A549 (cell line): ENCODE measurements at regions of chr16 and their contacts with region 1.

Region 1: DNA sequence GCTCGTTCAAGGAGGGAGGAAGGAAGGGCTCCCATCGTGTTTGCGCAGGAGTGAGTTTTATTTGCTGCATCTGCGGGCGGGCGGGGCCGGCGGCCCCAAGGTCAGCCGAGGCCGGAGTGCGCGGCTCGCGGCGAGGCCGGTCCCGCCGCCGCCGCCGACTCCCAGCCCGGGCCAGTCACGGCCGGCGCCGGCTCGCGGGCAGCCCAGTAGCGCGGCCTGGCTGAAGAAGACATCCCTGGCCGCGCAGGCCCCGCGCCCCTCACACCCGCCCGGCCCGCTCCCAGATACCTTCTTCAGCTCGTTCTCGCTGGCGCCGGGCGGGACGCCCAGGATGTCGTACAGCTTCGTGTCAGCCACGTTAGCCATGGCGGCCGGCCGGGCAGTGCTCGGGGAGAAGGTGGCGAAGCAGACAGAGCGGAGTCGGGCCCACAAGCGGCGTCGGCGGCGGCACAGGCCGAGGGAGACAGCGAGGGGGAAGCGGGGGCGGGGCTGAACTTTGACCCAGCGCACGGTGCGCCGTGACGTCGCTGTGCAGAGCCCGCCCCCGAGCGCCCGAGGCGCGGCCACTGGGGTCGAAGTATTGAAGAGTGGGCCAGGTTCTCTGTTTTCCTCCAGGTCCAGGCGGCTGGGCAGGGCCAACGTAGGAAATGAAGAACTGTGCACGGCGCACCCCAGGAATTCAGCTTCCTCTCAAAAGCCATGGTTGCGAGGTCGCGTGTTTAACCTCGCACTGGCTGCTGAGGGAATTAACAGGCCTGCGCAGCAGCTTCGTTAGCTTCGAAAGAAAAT is at the start of gene DNAJA2:
- DNase-seq: peak; percentile 85 to 89
- ATAC-seq: peak; percentile 96
- H3K4me3 ChIP-seq: peak within 1 kb of the TSS; percentile 94
- H3K27ac ChIP-seq: peak within 1 kb of the TSS; percentile 97 to 99
- H3K4me1 ChIP-seq: peaks cover 41% of the 10 kb centered on the region
- CTCF ChIP-seq: no peak
- EP300 ChIP-seq: no peak
- POLR2A ChIP-seq: peak; percentile 79; the same call in 1 of the 2 replicates
- RAD21 ChIP-seq: no peak
- polyA plus RNA-seq, gene DNAJA2: 28.8 and 33.7 TPM in 2 replicates

Region 2: DNA sequence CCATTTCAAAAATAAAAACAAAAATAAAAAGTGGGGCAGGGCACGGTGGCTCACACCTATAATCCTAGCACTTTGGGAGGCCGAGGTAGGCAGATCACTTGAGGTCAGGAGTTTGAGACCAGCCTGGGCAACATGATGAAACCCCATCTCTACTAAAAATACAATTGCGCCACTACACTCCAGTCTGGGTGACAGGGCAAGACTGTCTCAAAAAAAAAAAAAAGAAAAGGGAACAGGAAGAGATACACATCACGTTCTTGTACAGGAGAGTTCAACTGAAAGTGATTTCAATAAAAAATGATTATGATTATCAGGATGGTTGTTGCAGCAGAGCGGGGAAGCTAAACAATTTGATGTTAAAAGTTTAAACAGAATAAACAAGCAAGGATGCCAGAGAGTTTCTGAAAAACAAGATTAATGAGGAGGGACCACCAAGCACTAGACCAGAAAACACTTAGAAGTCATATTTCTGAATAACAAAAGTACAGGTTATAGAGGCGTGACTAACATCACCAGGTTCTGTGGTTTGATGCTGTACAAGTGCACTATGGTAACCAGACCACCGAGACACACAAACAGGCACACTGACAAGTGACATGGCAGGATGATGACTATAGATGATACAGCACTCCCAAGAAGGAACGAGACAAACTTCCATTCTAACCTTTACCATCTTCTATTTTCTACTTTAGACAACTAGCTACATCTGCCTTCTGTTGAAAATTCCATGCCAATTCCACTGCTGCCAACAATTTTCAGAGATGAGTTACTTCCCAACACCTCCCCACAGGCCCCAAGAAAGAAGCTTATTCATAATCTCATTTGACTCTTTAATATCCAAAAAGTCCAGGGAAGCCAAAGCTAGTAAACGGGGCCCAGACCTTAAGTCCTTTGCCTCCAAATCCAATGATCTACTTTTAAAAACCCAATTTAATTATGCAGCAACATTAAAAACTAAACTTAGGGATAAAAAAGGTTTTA is 11.7 kb before region 1 on chr16:
- CTCF ChIA-PET with region 1: interaction called, 4 read pairs
- POLR2A ChIA-PET with region 1: interaction called, 11 read pairs
- DNase-seq: no peak
- ATAC-seq: no peak
- H3K4me3 ChIP-seq: no peak overlapping the region
- H3K27ac ChIP-seq: peak overlapping the region in 1 of 2 experiments; percentile 58; a peak in 2 of 6 replicates
- H3K4me1 ChIP-seq: peaks cover 16% of the 10 kb centered on the region; the same call in 2 of the 3 replicates
- CTCF ChIP-seq: no peak
- EP300 ChIP-seq: no peak
- POLR2A ChIP-seq: no peak
- RAD21 ChIP-seq: no peak

Region 3: GRCh38 chr16:47065766-47066688 is 92.6 kb after region 1 on chr16:
- CTCF ChIA-PET with region 1: no interaction called
- POLR2A ChIA-PET with region 1: no interaction called
- DNase-seq: no peak
- ATAC-seq: no peak
- H3K4me3 ChIP-seq: no peak overlapping the region
- H3K27ac ChIP-seq: no peak overlapping the region
- H3K4me1 ChIP-seq: no peaks in the 10 kb centered on the region
- CTCF ChIP-seq: no peak
- EP300 ChIP-seq: no peak
- POLR2A ChIP-seq: no peak
- RAD21 ChIP-seq: no peak